HEK293T (cell line): ENCODE measurements at regions of chr6 and their contacts with region 1.

Region 1: DNA sequence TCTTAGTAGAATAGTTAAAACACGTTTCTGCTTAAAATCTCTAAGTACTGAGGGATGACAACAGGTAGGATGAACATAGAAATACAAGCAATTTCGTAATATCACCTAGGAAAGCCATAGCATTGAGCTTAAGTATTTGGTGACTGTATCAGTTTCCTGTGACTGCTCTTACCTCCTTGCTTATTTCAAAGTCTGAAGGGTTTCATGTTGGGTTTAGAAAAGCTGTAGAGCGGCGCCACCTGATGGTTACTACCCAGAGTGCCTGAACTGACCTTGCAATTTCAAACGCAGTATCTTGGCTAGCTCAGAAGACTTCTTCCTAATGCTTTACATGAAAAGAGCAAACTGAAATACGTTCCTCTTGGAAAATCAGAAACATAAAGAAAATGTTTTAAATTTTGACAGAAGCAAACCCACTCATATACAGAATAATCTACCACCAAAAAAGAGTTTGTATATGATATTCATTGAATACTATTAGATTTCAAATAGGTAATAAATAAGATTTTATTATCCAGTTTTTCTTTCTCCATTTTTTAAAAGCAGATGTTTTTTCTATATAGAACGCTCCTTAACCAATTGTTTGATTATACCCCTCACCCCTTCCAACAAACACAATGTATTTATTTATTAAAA is 82.3 kb upstream of the RIPOR2 start:
- DNase-seq: no peak

Region 2: DNA sequence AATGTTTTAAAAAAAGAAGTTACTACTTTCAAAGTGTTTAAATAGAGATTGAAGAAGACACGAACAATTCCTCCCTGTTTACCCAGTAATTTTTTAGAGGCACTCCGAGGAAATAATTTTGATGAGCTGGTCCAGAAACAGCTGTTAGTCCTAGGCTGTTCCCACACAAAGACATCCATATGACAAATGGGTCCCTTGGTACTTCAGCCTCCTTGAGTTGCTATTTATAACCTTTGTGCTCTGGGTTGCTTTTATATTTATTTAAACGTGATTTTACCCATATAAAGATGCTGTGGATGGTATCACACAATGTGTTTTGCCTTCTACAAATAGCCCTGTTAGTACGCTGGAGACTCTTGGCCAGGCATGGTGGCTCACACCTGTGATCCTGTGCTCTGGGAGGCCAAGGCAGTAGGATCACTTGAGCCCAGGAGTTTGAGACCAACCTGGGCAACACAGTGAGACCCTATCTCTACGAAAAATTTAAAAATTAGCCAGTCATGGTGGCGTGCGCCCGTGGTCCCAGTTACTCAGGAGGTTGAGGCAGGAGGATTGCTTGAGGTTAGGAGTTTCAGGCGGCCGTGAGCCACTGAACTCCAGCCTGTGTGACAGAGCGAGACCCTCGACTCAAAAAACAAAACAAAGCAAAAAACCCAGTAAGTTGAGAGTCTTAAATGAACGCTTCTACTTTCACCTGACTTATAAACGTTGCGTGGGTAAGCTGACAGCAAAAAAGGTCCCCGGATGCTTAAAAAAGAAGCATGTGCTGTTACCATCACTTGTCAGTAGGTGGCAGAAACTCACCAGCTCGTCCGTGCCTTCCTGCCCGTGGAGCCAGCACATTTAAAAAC is 162.4 kb before region 1 on chr6:
- CTCF ChIA-PET with region 1: interaction called, 11 read pairs
- POLR2A ChIA-PET with region 1: no interaction called
- DNase-seq: peak; percentile 78